ENCODE measurements at regions of chr16 and their contacts with region 1.

Region 1: GRCh38 chr16:67816240-67817031 is 9.7 kb downstream of the TSNAXIP1 start:
- DNase-seq: peak; percentile 85 to 95
- H3K4me3 ChIP-seq: no peak overlapping the region
- H3K4me3 Mint-ChIP-seq: no peak overlapping the region
- H3K27ac Mint-ChIP-seq: no peak overlapping the region
- H3K4me1 ChIP-seq: no peaks in the 10 kb centered on the region
- H3K4me1 Mint-ChIP-seq: no peaks in the 10 kb centered on the region
- H3K27me3 ChIP-seq: no peaks in the 10 kb centered on the region
- H3K27me3 Mint-ChIP-seq: no peaks in the 10 kb centered on the region
- CTCF ChIP-seq: peak; percentile 100

Region 2: GRCh38 chr16:67719048-67719777 is 97.2 kb before region 1 on chr16 and contains the start of gene GFOD2:
- CTCF ChIA-PET with region 1: interaction called, 12 read pairs
- POLR2A ChIA-PET with region 1: interaction called, 3 read pairs
- intact Hi-C with region 1: no loop called
- DNase-seq: peak; percentile 97 to 99
- H3K4me3 ChIP-seq: peak within 1 kb of the TSS; percentile 84
- H3K4me3 Mint-ChIP-seq: peak within 1 kb of the TSS; percentile 89
- H3K27ac Mint-ChIP-seq: peak within 1 kb of the TSS; percentile 86
- H3K4me1 ChIP-seq: peaks cover 25% of the 10 kb centered on the region
- H3K4me1 Mint-ChIP-seq: peaks cover 20% of the 10 kb centered on the region
- H3K27me3 ChIP-seq: no peaks in the 10 kb centered on the region
- H3K27me3 Mint-ChIP-seq: no peaks in the 10 kb centered on the region
- CTCF ChIP-seq: no peak
- total RNA-seq, gene GFOD2: 12.7 and 13.4 TPM in 2 replicates

Region 3: DNA sequence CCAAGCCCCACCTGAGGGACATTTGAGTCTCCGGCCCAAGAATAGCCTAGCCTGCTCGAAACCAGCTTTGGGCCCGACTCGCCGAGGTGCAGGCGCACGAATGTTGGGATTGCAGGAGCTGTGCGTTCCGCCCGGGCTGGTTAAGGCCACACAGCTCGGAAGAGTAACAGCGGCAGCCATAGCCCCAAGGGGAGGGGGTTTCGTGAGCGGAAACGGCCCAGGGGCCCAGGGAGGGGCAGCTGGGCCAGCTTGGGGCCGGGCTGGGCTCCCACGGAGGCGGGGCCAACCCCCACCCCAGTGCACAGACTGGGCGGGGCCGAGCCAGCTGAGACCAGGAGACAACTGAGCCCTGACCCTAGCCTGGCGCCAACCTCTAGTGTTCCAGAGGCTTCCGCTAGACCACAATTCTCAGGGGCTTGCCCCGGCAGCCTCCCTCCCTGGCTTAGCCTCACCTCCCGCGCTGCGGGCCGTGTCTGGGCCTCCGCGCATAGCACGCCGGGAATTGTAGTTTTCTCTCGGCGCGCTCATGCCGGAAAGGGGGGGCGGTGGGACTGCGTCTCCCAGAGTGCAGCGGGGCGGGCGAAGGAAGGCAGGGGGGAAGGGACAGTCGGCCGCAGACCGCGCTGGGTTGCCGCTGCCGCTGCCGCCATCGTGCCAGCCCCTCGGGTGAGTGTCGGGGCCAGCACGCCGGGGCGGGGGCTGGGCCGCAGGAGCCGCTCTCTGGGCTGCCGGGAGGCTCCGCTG is 30.1 kb after region 1 on chr16 and contains the start of gene NUTF2:
- CTCF ChIA-PET with region 1: interaction called, 18 read pairs
- POLR2A ChIA-PET with region 1: interaction called, 7 read pairs
- intact Hi-C with region 1: no loop called
- DNase-seq: peak; percentile 99
- H3K4me3 ChIP-seq: peak within 1 kb of the TSS; percentile 98
- H3K4me3 Mint-ChIP-seq: peak within 1 kb of the TSS; percentile 75
- H3K27ac Mint-ChIP-seq: peak within 1 kb of the TSS; percentile 93
- H3K4me1 ChIP-seq: peaks cover 33% of the 10 kb centered on the region
- H3K4me1 Mint-ChIP-seq: peaks cover 17% of the 10 kb centered on the region
- H3K27me3 ChIP-seq: no peaks in the 10 kb centered on the region
- H3K27me3 Mint-ChIP-seq: no peaks in the 10 kb centered on the region
- CTCF ChIP-seq: no peak
- total RNA-seq, gene NUTF2: 239 and 245 TPM in 2 replicates

Region 4: GRCh38 chr16:67865316-67865715 is 48.9 kb after region 1 on chr16:
- CTCF ChIA-PET with region 1: interaction called, 48 read pairs
- POLR2A ChIA-PET with region 1: interaction called, 11 read pairs
- intact Hi-C with region 1: loop called (anchors 1 kb)
- DNase-seq: peak; percentile 59 to 72
- H3K4me3 ChIP-seq: no peak overlapping the region
- H3K4me3 Mint-ChIP-seq: no peak overlapping the region
- H3K27ac Mint-ChIP-seq: no peak overlapping the region
- H3K4me1 ChIP-seq: no peaks in the 10 kb centered on the region
- H3K4me1 Mint-ChIP-seq: no peaks in the 10 kb centered on the region
- H3K27me3 ChIP-seq: no peaks in the 10 kb centered on the region
- H3K27me3 Mint-ChIP-seq: no peaks in the 10 kb centered on the region
- CTCF ChIP-seq: peak; percentile 57 to 83

Region 5: DNA sequence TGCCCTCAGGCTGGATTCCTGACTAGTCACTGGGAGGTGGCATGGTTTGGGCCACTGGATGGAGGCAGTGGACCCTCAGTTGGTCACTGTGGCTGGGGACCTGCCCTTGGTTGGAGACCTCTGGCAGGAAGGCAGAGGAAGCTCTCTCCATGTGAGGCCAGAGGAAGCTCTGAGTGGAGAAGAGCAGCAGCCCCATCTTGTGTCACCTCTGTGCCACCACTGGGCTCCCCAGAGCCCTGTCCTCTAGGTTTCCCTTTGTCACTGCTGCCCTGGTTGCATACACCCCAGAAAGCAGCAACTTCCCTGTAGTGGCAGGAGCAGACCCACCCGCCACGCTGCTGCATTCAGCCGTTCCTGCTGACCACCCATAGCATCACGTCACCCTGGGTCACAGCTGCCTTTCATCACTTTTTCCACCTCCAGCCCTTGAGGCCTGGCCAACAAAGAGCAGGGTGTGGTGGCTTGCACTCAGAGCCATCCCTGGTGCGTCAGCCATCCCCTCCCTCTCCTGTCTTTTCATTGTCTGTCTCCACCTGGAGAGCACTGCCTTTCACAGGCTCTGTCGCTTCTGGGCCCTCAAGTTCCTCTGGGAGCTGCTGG is 103.3 kb after region 1 on chr16:
- CTCF ChIA-PET with region 1: interaction called, 12 read pairs
- POLR2A ChIA-PET with region 1: interaction called, 6 read pairs
- intact Hi-C with region 1: no loop called
- DNase-seq: no peak
- H3K4me3 ChIP-seq: no peak overlapping the region
- H3K4me3 Mint-ChIP-seq: no peak overlapping the region
- H3K27ac Mint-ChIP-seq: no peak overlapping the region
- H3K4me1 ChIP-seq: no peaks in the 10 kb centered on the region
- H3K4me1 Mint-ChIP-seq: peaks cover 7% of the 10 kb centered on the region
- H3K27me3 ChIP-seq: no peaks in the 10 kb centered on the region
- H3K27me3 Mint-ChIP-seq: no peaks in the 10 kb centered on the region
- CTCF ChIP-seq: peak in 1 of 2 experiments; percentile 30

Region 6: GRCh38 chr16:68040507-68041288 is 224.3 kb after region 1 on chr16:
- CTCF ChIA-PET with region 1: interaction called, 6 read pairs
- POLR2A ChIA-PET with region 1: no interaction called
- intact Hi-C with region 1: loop called (anchors 1 kb)
- DNase-seq: peak; percentile 86 to 92
- H3K4me3 ChIP-seq: no peak overlapping the region
- H3K4me3 Mint-ChIP-seq: no peak overlapping the region
- H3K27ac Mint-ChIP-seq: no peak overlapping the region
- H3K4me1 ChIP-seq: no peaks in the 10 kb centered on the region
- H3K4me1 Mint-ChIP-seq: no peaks in the 10 kb centered on the region
- H3K27me3 ChIP-seq: no peaks in the 10 kb centered on the region
- H3K27me3 Mint-ChIP-seq: no peaks in the 10 kb centered on the region
- CTCF ChIP-seq: peak; percentile 92 to 95

Measured in Caco-2 (cell line).